PC-9 (cell line): ENCODE measurements at regions of chr2 and their contacts with region 1.

Region 1: GRCh38 chr2:205561441-205561840 is 120.9 kb upstream of the NRP2 start:
- DNase-seq: no peak
- H3K4me3 ChIP-seq: no peak overlapping the region
- H3K27ac ChIP-seq: no peak overlapping the region
- H3K4me1 ChIP-seq: no peaks in the 10 kb centered on the region
- H3K27me3 ChIP-seq: no peaks in the 10 kb centered on the region
- CTCF ChIP-seq: no peak

Region 2: GRCh38 chr2:205424336-205424735 is 137.1 kb before region 1 on chr2:
- CTCF ChIA-PET with region 1: no interaction called
- POLR2A ChIA-PET with region 1: no interaction called
- intact Hi-C with region 1: no loop called
- DNase-seq: no peak
- H3K4me3 ChIP-seq: no peak overlapping the region
- H3K27ac ChIP-seq: no peak overlapping the region
- H3K4me1 ChIP-seq: peaks cover 5% of the 10 kb centered on the region; the same call in 1 of the 2 replicates
- H3K27me3 ChIP-seq: no peaks in the 10 kb centered on the region
- CTCF ChIP-seq: no peak

Region 3: DNA sequence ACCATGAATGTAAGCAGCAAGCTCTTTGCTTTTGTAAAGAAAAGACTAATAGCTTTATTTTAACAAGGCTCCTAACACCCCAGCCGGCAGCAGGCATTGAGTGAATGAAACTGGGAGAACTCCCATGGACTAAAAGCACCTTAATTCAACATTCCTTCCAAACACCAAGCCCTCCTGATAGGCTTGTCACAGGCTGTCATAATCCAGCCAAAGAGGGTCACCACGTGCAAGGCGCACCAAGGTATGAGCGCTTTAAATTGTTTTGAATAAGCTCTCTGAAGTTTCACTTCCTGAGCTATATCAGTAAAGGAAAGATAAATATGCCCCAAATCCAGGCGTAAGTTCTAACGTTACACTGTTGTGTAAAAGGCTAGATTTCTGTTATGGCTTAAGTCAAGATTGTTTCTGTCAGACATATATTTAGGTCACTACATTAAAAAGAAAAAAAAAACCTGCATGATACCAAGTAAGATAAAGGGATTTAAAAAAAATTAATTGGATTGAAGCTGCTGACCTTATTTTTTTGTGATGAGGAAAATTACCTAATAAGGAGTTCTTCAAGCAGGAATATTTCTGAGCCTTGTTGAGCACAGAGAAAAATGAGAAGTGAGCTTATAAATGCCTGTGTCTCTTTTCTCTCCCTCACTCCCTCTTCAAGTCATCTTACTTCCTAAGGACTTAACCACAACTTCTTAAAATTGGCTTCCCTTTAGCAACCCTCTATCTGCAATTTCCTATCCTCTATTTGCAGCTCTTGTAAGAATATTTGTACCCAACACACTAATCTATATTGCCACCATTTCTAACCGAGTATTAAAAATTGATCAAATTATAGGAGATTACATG is 15.2 kb before region 1 on chr2:
- CTCF ChIA-PET with region 1: no interaction called
- POLR2A ChIA-PET with region 1: interaction called, 11 read pairs
- intact Hi-C with region 1: no loop called
- DNase-seq: no peak
- H3K4me3 ChIP-seq: no peak overlapping the region
- H3K27ac ChIP-seq: no peak overlapping the region
- H3K4me1 ChIP-seq: no peaks in the 10 kb centered on the region
- H3K27me3 ChIP-seq: no peaks in the 10 kb centered on the region
- CTCF ChIP-seq: no peak